ENCODE measurements at regions of chr11 and their contacts with region 1.

Region 1: DNA sequence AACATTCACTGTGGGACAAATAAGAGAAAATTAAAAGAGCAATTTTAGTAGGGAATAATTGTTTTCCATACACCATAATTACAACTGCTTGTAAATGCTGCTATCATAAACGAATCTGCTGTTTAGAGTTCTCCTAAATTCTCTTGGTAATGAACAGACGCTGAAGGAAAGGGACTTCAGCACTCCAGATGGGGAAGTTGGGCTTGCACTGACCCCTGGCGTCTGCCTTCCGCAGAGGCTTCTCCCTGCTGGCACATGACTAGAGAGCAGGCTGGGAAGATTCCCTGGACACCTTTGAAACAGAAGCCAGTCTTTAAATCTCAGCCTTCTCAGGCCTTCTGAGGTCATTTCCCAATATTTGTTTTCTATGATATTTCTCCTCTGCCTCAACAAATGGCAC is 84.1 kb downstream of the NXPE2 start:
- DNase-seq: peak in 1 of 2 donors; percentile 34
- ATAC-seq: no peak
- H3K4me3 ChIP-seq: no peak overlapping the region
- H3K4me3 Mint-ChIP-seq: no peak overlapping the region
- H3K27ac ChIP-seq: no peak overlapping the region
- H3K27ac Mint-ChIP-seq: no peak overlapping the region
- H3K4me1 ChIP-seq: no peaks in the 10 kb centered on the region
- H3K4me1 Mint-ChIP-seq: no peaks in the 10 kb centered on the region
- H3K27me3 ChIP-seq: no peaks in the 10 kb centered on the region
- H3K27me3 Mint-ChIP-seq: peaks cover 21 to 23% of the 10 kb centered on the region in 2 donors
- CTCF ChIP-seq: no peak

Region 2: DNA sequence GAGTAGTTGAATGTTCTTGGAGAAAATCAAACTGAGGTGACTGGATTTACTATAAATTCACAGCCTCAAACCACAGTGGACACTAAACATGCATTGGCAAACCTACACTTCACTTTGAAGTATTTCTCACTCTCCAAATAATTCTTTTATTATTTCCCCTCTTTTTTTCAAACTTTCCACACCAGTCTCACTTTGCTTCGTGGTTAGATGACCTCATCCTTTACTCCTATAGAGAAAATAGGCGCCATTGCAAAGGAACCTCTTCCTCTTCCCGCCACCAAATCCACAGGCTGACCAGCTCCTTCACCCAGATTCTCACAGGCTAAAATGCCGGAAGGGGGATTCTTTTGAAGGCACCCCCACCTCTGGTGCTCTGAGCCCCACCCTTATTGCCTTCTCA is 754.1 kb before region 1 on chr11:
- intact Hi-C with region 1: no loop called
- DNase-seq: no peak
- ATAC-seq: no peak
- H3K4me3 ChIP-seq: no peak overlapping the region
- H3K4me3 Mint-ChIP-seq: no peak overlapping the region
- H3K27ac ChIP-seq: no peak overlapping the region
- H3K27ac Mint-ChIP-seq: no peak overlapping the region
- H3K4me1 ChIP-seq: no peaks in the 10 kb centered on the region
- H3K4me1 Mint-ChIP-seq: peaks cover 12 to 16% of the 10 kb centered on the region in 2 donors
- H3K27me3 ChIP-seq: no peaks in the 10 kb centered on the region
- H3K27me3 Mint-ChIP-seq: peaks cover 21% of the 10 kb centered on the region in 2 donors
- CTCF ChIP-seq: no peak

Region 3: DNA sequence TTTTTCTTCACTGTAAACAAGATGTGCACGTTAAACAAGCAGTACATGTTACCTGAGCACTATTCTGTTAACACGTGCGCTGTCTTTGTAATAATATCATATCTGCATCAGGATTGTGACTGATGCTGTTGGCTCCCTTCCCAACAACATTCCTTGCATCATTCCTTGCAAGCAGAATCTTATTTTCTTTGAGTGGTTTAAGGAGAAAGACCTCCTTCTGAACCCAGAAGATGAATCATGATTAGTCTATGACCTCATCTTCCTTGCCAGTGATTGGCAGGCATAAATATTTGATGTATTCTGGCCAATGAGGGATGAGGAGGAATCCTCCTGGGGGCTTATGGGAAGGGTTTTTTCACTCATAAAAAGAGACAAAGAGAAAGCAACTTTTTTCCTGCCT is 408.3 kb before region 1 on chr11:
- intact Hi-C with region 1: loop called (anchors 5 kb)
- DNase-seq: no peak
- ATAC-seq: no peak
- H3K4me3 ChIP-seq: no peak overlapping the region
- H3K4me3 Mint-ChIP-seq: no peak overlapping the region
- H3K27ac ChIP-seq: no peak overlapping the region
- H3K27ac Mint-ChIP-seq: no peak overlapping the region
- H3K4me1 ChIP-seq: no peaks in the 10 kb centered on the region
- H3K4me1 Mint-ChIP-seq: no peaks in the 10 kb centered on the region
- H3K27me3 ChIP-seq: no peaks in the 10 kb centered on the region
- H3K27me3 Mint-ChIP-seq: peaks cover 2 to 10% of the 10 kb centered on the region in 2 donors
- CTCF ChIP-seq: no peak

Region 4: DNA sequence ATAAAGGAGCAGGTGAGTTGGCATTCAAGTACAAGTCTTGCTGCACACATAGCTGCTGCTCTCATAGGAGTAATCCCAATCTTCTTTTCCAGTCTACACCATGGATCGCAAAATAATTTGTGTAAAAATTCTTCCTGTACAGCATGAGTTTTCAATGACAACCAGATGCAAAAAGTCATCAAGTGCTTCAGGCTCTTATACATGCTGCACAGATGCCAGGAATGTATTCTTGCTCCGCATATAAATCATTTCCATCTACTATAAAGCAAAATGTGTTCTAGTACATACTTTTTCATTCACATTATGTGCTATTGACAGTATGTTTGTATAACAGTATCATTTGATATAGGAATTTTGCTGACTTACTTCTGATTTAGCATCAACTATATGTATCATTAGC is 48.7 kb before region 1 on chr11:
- intact Hi-C with region 1: no loop called
- DNase-seq: no peak
- ATAC-seq: no peak
- H3K4me3 ChIP-seq: no peak overlapping the region
- H3K4me3 Mint-ChIP-seq: no peak overlapping the region
- H3K27ac ChIP-seq: no peak overlapping the region
- H3K27ac Mint-ChIP-seq: no peak overlapping the region
- H3K4me1 ChIP-seq: no peaks in the 10 kb centered on the region
- H3K4me1 Mint-ChIP-seq: no peaks in the 10 kb centered on the region
- H3K27me3 ChIP-seq: no peaks in the 10 kb centered on the region
- H3K27me3 Mint-ChIP-seq: peaks cover 2 to 13% of the 10 kb centered on the region in 2 donors
- CTCF ChIP-seq: no peak

Region 5: DNA sequence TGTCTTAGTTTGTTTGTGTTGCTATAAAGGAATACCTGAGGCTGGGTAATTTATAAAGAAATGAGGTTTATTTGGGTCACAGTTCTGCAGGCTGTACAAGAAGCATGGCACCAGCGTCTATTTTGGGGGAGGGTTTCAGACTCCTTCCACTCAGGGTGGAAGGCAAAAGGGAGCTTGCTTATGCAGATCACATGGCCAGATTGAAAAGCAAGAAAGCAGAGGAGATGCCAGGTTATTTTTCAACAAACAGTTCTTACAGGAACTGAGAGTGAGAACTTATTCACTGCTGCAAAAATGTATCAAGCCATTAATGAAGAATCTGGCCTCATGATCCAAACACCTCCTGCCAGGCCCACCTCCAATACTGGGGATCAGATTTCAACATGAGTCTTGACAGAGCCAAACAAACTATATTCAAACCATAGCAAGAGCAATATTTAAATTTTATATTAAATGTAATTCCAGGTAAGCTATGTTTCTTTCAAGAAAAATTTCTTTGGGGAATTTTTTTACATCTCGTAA is 17.2 kb before region 1 on chr11:
- intact Hi-C with region 1: no loop called
- DNase-seq: no peak
- ATAC-seq: no peak
- H3K4me3 ChIP-seq: no peak overlapping the region
- H3K4me3 Mint-ChIP-seq: no peak overlapping the region
- H3K27ac ChIP-seq: no peak overlapping the region
- H3K27ac Mint-ChIP-seq: no peak overlapping the region
- H3K4me1 ChIP-seq: no peaks in the 10 kb centered on the region
- H3K4me1 Mint-ChIP-seq: no peaks in the 10 kb centered on the region
- H3K27me3 ChIP-seq: no peaks in the 10 kb centered on the region
- H3K27me3 Mint-ChIP-seq: peaks cover 0 to 8% of the 10 kb centered on the region in 2 donors
- CTCF ChIP-seq: no peak

Measured in natural killer cell (primary cell).